ENCODE measurements at regions of chr12 and their contacts with region 1.

Region 1: DNA sequence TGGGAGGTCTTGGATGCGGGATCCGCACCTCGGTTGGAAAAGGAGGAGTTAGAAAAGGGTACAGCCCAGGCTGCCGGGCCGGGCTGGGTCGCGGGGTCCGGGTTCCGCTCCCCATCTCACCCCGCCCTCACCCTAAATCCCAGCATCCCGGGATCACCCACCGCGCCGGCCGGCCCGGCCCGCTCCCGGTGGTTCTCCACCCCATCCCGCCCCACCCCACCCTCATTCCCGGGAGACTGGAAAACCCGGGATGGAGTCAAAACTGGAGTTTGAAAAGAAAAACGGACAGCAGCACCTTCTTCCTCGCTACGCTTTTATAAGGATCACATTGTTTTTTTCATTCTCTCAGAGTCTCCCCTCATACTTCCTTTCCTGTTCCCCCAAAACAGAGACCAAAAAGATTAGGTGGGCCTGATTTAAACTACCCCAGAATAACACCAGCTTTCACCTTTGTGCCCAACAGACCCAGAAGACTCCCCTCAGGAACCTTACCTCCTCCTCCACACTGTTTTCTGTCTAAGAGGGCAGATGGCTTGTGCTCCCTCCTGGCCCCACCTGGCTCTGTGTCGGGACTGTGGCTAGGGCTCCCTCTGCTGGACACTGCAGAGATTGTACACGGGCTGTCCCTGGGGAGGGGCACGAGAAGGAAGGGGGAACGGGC is 2.8 kb downstream of the GLI1 start:
- DNase-seq: peak; percentile 96
- ATAC-seq: peak; percentile 59
- H3K4me3 Mint-ChIP-seq: peak overlapping the region; percentile 96
- H3K27ac Mint-ChIP-seq: peak overlapping the region; percentile 100
- H3K4me1 Mint-ChIP-seq: peaks cover 25% of the 10 kb centered on the region
- H3K27me3 Mint-ChIP-seq: peaks cover 9% of the 10 kb centered on the region
- CTCF ChIP-seq: peak; percentile 81

Region 2: DNA sequence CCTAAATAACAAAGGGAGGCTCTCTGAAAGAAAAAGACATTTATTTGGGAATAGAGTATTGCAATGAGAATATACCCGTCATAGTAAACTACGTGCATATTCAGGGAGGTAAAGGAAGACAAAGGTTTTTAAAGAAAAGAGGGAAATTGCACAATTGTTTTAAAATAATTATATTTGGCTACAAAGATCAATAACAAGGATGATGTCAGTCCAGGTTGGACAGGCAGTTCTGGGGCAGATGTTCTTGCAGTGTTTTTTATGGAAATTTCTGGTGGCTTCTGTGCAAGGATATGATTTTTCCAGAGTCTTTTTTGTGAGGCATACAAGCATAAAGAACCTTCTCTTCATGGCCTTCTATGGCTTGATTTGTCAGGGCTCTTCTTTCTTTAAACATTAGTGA is 669.7 kb before region 1 on chr12:
- CTCF ChIA-PET with region 1: no interaction called
- POLR2A ChIA-PET with region 1: no interaction called
- DNase-seq: no peak
- ATAC-seq: no peak
- H3K4me3 Mint-ChIP-seq: no peak overlapping the region
- H3K27ac Mint-ChIP-seq: no peak overlapping the region
- H3K4me1 Mint-ChIP-seq: no peaks in the 10 kb centered on the region
- H3K27me3 Mint-ChIP-seq: peaks cover 8% of the 10 kb centered on the region
- CTCF ChIP-seq: no peak

Region 3: GRCh38 chr12:57229634-57230380 is 232.6 kb before region 1 on chr12 and contains the start of gene SHMT2:
- CTCF ChIA-PET with region 1: interaction called, 42 read pairs
- POLR2A ChIA-PET with region 1: interaction called, 6 read pairs
- DNase-seq: peak; percentile 97
- ATAC-seq: peak; percentile 41
- H3K4me3 Mint-ChIP-seq: peak within 1 kb of the TSS; percentile 98
- H3K27ac Mint-ChIP-seq: peak within 1 kb of the TSS; percentile 94
- H3K4me1 Mint-ChIP-seq: peaks cover 49% of the 10 kb centered on the region
- H3K27me3 Mint-ChIP-seq: peaks cover 53% of the 10 kb centered on the region
- CTCF ChIP-seq: no peak
- total RNA-seq, gene SHMT2: 262 to 297 TPM (median 265 TPM) in 3 replicates

Region 4: DNA sequence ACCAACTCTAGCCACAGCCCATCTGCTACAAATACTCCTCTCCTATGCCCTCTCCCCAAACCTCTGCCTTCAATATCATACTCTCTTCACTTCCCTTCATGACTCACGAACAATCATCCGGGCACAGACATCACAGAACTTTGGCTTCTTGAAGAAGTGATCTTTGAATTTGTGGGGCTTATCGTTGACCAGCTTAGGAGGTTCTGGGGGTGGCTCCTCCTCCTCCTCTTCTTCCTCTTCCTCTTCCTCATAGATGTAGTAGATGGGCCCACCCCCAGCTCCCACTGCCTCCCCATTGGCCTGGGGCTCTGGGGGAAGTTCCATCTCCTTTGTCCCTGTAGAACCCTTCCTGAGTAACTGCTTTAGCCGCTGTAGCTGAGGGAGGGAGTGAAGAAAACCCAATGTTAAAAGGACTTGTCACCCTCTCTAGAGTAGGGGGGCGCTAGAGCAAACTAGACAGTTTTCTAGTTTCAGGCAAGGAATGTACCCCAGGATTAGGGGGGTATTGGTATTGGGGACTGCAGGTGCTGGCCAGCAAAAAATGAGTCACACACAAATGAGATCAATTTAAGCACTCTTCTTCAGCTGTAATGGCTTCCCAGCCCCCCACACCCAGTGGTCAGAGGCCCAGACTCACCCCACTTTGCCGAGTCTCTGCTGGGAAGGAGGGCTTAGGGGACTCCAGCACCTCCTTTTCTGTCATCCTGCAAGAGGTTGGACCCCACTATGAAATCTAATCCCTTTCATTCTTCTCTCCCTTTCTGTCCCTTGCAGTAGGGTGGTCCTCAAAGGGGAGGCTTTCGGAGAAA is 213.2 kb before region 1 on chr12:
- CTCF ChIA-PET with region 1: interaction called, 48 read pairs
- POLR2A ChIA-PET with region 1: interaction called, 4 read pairs
- DNase-seq: peak; percentile 7
- ATAC-seq: peak; percentile 6; the same call in 1 of the 2 replicates
- H3K4me3 Mint-ChIP-seq: no peak overlapping the region
- H3K27ac Mint-ChIP-seq: peak overlapping the region; percentile 11; the same call in 1 of the 2 replicates
- H3K4me1 Mint-ChIP-seq: peaks cover 50% of the 10 kb centered on the region
- H3K27me3 Mint-ChIP-seq: peaks cover 10% of the 10 kb centered on the region
- CTCF ChIP-seq: no peak

Region 5: DNA sequence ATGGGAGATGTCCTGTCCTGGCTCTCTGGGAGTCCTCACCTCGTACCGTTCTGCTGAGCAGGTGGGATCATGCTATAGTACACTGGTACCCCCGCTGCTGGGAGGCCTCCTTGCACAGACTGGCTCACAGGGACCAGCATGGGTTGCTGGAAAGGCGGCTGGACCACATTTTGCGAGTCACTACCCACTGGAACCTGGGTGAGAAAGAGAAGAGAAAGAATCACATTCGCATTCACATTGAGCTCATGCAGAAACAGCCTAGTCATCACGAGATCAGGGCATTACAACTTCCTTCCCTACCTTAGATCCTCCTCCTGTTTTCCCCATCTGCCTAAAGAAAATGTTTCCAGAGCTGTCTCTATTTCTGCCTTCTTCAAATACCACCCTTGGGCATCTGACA is 194.1 kb before region 1 on chr12:
- CTCF ChIA-PET with region 1: interaction called, 15 read pairs
- POLR2A ChIA-PET with region 1: no interaction called
- DNase-seq: no peak
- ATAC-seq: no peak
- H3K4me3 Mint-ChIP-seq: no peak overlapping the region
- H3K27ac Mint-ChIP-seq: no peak overlapping the region
- H3K4me1 Mint-ChIP-seq: no peaks in the 10 kb centered on the region
- H3K27me3 Mint-ChIP-seq: no peaks in the 10 kb centered on the region
- CTCF ChIP-seq: no peak

Region 6: GRCh38 chr12:57309420-57309819 is 153.0 kb before region 1 on chr12:
- CTCF ChIA-PET with region 1: interaction called, 32 read pairs
- POLR2A ChIA-PET with region 1: no interaction called
- DNase-seq: no peak
- ATAC-seq: no peak
- H3K4me3 Mint-ChIP-seq: no peak overlapping the region
- H3K27ac Mint-ChIP-seq: no peak overlapping the region
- H3K4me1 Mint-ChIP-seq: no peaks in the 10 kb centered on the region
- H3K27me3 Mint-ChIP-seq: no peaks in the 10 kb centered on the region
- CTCF ChIP-seq: no peak

Region 7: DNA sequence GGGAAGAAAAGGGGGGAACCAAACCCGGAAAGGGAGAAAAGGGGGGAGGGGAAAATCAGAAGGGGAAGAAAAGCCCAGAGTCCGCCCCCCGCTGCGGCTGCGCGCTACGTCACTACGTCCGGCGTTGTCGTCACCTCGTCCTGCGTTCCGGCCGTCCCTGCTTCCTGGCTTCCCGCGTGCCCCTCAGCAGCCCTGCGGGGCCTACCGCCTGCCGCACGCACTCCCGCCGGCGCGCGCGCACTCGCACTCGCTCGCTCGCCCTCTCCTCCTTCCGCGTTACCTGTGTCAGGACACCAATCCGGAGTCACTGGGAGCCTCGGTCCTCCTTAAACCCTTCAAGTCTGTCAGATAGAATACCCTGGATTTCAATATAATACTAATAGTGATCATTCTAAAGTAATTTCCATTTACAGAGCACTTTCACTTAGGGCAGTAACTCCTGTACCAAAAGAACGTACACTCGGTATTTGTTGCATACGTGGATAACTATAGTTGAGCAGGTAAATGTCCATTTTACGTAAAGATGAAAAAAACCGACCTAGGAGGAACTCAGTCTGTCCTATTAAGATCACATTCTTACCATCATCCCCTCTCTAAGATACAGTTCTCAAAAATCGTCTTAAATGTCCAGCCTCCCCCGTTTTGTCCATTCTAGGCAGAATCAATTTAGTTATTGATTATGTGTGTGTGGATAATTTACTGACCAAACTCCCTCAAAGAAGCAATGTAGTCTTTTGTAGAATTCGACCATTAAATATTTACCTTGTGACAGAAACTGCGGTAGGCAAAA is 31.3 kb before region 1 on chr12 and contains the start of gene R3HDM2:
- CTCF ChIA-PET with region 1: interaction called, 13 read pairs
- POLR2A ChIA-PET with region 1: interaction called, 9 read pairs
- DNase-seq: peak; percentile 95
- ATAC-seq: peak; percentile 92
- H3K4me3 Mint-ChIP-seq: peak within 1 kb of the TSS; percentile 88
- H3K27ac Mint-ChIP-seq: peak within 1 kb of the TSS; percentile 96
- H3K4me1 Mint-ChIP-seq: peaks cover 25% of the 10 kb centered on the region
- H3K27me3 Mint-ChIP-seq: no peaks in the 10 kb centered on the region; the same call in 1 of the 2 replicates
- CTCF ChIP-seq: no peak
- total RNA-seq, gene R3HDM2: 34.7 to 39.8 TPM (median 37.5 TPM) in 3 replicates

Region 8: GRCh38 chr12:57534991-57535543 is 72.7 kb after region 1 on chr12:
- CTCF ChIA-PET with region 1: no interaction called
- POLR2A ChIA-PET with region 1: no interaction called
- DNase-seq: no peak
- ATAC-seq: no peak
- H3K4me3 Mint-ChIP-seq: no peak overlapping the region
- H3K27ac Mint-ChIP-seq: no peak overlapping the region
- H3K4me1 Mint-ChIP-seq: peaks cover 9% of the 10 kb centered on the region
- H3K27me3 Mint-ChIP-seq: no peaks in the 10 kb centered on the region
- CTCF ChIP-seq: no peak